Naive thymus-derived CD4-positive, alpha-beta T cell (primary cell): ENCODE measurements at regions of chr4 and their contacts with region 1.

Region 1: GRCh38 chr4:174318829-174319764 is 35.4 kb downstream of the CEP44 start:
- DNase-seq: peak in 5 of 9 donors; percentile 27 to 45 (median 39)
- ATAC-seq: no peak
- H3K4me3 ChIP-seq: no peak overlapping the region
- H3K4me3 Mint-ChIP-seq: no peak overlapping the region
- H3K27ac ChIP-seq: no peak overlapping the region
- H3K27ac Mint-ChIP-seq: no peak overlapping the region
- H3K4me1 ChIP-seq: no peaks in the 10 kb centered on the region
- H3K4me1 Mint-ChIP-seq: no peaks in the 10 kb centered on the region
- H3K27me3 ChIP-seq: no peaks in the 10 kb centered on the region
- H3K27me3 Mint-ChIP-seq: no peaks in the 10 kb centered on the region

Region 2: DNA sequence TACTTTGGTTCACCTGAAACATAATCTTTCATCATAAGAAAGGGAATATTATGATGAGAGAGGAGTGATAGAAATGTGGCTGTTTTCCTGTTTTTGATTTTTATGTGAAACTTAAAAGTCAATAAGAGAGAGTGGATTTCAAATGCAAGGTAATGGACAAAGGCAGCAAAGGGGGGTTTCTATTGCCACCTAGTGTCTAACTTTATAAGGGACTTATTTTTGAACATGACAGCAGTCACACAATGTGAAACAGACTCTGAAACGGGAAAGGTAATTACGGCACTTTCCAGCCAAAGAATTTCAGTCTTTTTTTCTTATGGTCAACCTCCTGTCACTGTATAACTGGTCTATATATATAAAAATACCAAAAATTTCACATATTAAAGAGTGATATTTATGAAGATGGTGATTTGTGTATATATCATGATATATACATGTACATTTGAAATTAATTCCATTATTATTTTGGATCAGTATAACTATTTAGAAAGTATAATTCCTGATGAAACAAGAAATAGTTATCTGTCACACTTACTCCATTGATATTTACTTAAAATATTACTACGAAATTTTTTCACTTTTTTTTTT is 162.8 kb before region 1 on chr4:
- CTCF ChIA-PET with region 1: no interaction called
- POLR2A ChIA-PET with region 1: no interaction called
- intact Hi-C with region 1: loop called in 1 of 2 experiments (anchors 1 kb)
- DNase-seq: peak in 3 of 9 donors; percentile 6 to 18 (median 14)
- ATAC-seq: peak; percentile 31
- H3K4me3 ChIP-seq: no peak overlapping the region
- H3K4me3 Mint-ChIP-seq: no peak overlapping the region
- H3K27ac ChIP-seq: no peak overlapping the region
- H3K27ac Mint-ChIP-seq: no peak overlapping the region
- H3K4me1 ChIP-seq: no peaks in the 10 kb centered on the region
- H3K4me1 Mint-ChIP-seq: no peaks in the 10 kb centered on the region
- H3K27me3 ChIP-seq: no peaks in the 10 kb centered on the region
- H3K27me3 Mint-ChIP-seq: peaks cover 2 to 44% (median 33%) of the 10 kb centered on the region in 5 donors

Region 3: GRCh38 chr4:174222266-174222872 is 96.7 kb before region 1 on chr4:
- CTCF ChIA-PET with region 1: interaction called, 5 read pairs
- POLR2A ChIA-PET with region 1: no interaction called
- intact Hi-C with region 1: loop called (anchors 1 kb)
- DNase-seq: peak in 3 of 9 donors; percentile 22 to 33 (median 25)
- ATAC-seq: peak; percentile 64
- H3K4me3 ChIP-seq: no peak overlapping the region
- H3K4me3 Mint-ChIP-seq: no peak overlapping the region
- H3K27ac ChIP-seq: no peak overlapping the region
- H3K27ac Mint-ChIP-seq: no peak overlapping the region
- H3K4me1 ChIP-seq: peaks cover 5% of the 10 kb centered on the region in 2 donors
- H3K4me1 Mint-ChIP-seq: peaks cover 7 to 11% (median 8%) of the 10 kb centered on the region in 7 donors
- H3K27me3 ChIP-seq: peaks cover 0 to 15% of the 10 kb centered on the region in 2 donors
- H3K27me3 Mint-ChIP-seq: peaks cover 43 to 69% (median 63%) of the 10 kb centered on the region in 5 donors